Endothelial cell of umbilical vein (primary cell): ENCODE measurements at regions of chr2 and their contacts with region 1.

Region 1: GRCh38 chr2:235106874-235107639 is 155.2 kb downstream of the SH3BP4 start:
- DNase-seq: peak; percentile 70
- H3K4me3 ChIP-seq: no peak overlapping the region
- H3K27ac ChIP-seq: no peak overlapping the region
- H3K4me1 ChIP-seq: no peaks in the 10 kb centered on the region
- H3K27me3 ChIP-seq: no peaks in the 10 kb centered on the region
- CTCF ChIP-seq: peak; percentile 74 to 84
- POLR2A ChIP-seq: no peak

Region 2: DNA sequence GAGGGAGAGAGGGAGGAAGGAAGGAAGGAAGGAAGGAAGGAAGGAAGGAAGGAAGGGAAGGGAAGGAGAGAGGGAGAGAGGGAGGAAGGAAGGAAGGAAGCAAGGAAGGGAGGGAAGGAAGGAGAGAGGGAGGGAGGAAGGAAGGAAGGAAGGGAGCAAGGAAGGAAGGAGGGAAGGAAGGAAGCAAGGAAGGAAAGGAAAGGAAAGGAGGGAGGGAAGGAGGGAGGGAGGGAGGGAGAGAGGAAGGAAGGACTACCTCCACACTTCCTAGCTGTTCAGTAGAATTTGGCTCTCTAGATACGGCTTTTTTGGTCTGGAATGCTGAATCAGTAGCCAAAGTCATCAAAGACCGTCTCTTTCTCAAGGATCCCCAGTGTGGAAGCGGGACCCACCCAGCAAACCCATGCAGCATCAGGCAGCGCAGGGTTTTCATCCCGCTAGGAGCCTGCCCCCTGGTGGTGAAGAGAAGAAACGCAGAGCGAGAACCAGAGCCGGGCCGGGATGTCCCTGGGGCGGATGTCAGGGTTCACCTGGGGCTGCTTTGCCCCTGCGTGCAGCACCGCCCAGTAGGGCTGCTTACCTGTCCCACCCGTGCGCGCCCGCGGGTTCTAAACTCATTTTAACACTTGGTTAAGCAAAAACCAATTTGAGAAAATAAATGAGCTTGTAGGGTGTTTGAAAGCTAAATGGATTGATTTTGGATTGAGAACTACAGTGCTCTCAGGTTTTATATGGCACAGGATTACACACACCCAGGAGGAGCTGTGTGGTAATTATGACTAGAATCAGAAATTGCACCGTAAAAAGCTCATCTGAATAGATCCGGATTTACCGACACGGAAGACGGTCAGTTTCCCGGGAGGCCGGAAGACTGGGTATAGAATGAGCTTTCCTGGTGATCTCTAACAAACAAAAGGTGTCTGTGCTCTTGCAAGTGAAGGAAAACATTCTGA is 562.1 kb before region 1 on chr2:
- CTCF ChIA-PET with region 1: interaction called, 98 read pairs
- POLR2A ChIA-PET with region 1: no interaction called
- dilution Hi-C with region 1: loop called (anchors 25 kb)
- intact Hi-C with region 1: loop called (anchors 1 kb)
- DNase-seq: peak; percentile 38
- H3K4me3 ChIP-seq: no peak overlapping the region
- H3K27ac ChIP-seq: no peak overlapping the region
- H3K4me1 ChIP-seq: peaks cover 6% of the 10 kb centered on the region
- H3K27me3 ChIP-seq: peaks cover 0 to 6% of the 10 kb centered on the region in 2 experiments
- CTCF ChIP-seq: peak; percentile 71 to 96
- POLR2A ChIP-seq: no peak

Region 3: DNA sequence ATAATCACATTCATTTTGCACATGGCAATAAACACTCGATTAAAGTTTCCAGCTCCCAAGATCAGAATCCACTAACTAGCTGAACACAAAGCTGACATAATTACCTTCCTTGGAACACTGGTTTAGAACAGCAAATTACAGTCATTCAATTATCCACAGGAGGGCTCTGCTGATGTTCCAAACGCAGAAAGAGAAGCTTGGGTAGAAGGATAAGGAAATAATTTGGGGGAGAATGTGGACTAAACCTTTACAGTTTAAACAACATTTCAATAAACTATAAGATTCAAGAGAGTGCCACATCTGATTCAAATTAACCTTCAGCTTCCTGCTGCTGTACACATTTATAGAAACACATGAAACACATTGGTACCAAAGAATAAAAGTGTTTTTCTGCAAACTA is 542.4 kb before region 1 on chr2:
- CTCF ChIA-PET with region 1: interaction called, 17 read pairs
- POLR2A ChIA-PET with region 1: no interaction called
- dilution Hi-C with region 1: loop called (anchors 25 kb)
- intact Hi-C with region 1: no loop called
- DNase-seq: peak; percentile 12
- H3K4me3 ChIP-seq: no peak overlapping the region
- H3K27ac ChIP-seq: no peak overlapping the region
- H3K4me1 ChIP-seq: no peaks in the 10 kb centered on the region
- H3K27me3 ChIP-seq: peaks cover 0 to under 1% of the 10 kb centered on the region in 2 experiments
- CTCF ChIP-seq: peak in 1 of 2 donors; percentile 4
- POLR2A ChIP-seq: no peak

Region 4: GRCh38 chr2:234751275-234751973 is 355.6 kb before region 1 on chr2:
- CTCF ChIA-PET with region 1: interaction called, 17 read pairs
- POLR2A ChIA-PET with region 1: no interaction called
- dilution Hi-C with region 1: no loop called
- intact Hi-C with region 1: loop called (anchors 2 kb)
- DNase-seq: peak; percentile 10
- H3K4me3 ChIP-seq: no peak overlapping the region
- H3K27ac ChIP-seq: no peak overlapping the region
- H3K4me1 ChIP-seq: no peaks in the 10 kb centered on the region
- H3K27me3 ChIP-seq: peaks cover 0 to 5% of the 10 kb centered on the region in 2 experiments
- CTCF ChIP-seq: no peak
- POLR2A ChIP-seq: no peak

Region 5: GRCh38 chr2:234951664-234952269 is 155.3 kb before region 1 on chr2 and contains the start of gene SH3BP4:
- CTCF ChIA-PET with region 1: interaction called, 13 read pairs
- POLR2A ChIA-PET with region 1: no interaction called
- dilution Hi-C with region 1: no loop called
- intact Hi-C with region 1: loop called (anchors 1 kb)
- DNase-seq: peak; percentile 64
- H3K4me3 ChIP-seq: peak within 1 kb of the TSS; percentile 87 to 95 (median 94)
- H3K27ac ChIP-seq: peak within 1 kb of the TSS; percentile 92
- H3K4me1 ChIP-seq: peaks cover 28% of the 10 kb centered on the region
- H3K27me3 ChIP-seq: no peaks in the 10 kb centered on the region
- CTCF ChIP-seq: no peak
- POLR2A ChIP-seq: peak; percentile 60
- total RNA-seq, gene SH3BP4: 100.0 and 105 TPM in 2 replicates

Region 6: DNA sequence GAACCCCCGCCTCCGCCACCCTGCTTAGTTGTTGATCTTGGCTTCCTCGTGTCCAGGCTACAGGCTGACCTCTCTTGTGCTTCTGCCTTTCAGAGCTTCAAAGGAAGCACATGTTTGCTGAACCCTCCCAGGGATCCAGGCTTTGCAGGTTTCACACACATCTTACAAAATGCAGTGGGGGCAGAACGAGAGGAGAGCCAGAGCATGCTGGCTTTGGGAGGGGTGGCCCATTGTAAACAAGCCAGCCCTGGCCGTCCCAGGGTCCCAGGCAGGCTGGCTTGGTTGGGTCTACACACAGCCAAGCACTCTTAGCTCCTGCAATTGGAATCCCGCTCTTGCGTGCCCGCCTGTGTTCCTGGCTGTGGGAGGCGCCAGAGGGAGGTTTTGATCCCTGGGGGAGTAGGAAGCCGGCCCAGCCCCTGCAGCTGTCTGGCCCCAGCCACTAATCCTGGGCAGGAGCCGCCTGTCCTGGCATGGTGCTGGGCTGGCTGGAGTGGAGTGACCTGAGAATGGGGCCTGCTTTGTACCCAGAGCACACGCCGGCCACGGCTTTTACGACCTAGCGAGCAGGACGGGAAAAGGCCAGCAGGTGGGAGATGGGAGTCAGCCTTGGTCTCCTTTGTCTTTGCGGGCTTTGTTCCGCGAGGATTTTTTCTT is 101.3 kb before region 1 on chr2:
- CTCF ChIA-PET with region 1: interaction called, 12 read pairs
- POLR2A ChIA-PET with region 1: no interaction called
- dilution Hi-C with region 1: no loop called
- intact Hi-C with region 1: loop called (anchors 1 kb)
- DNase-seq: peak; percentile 75
- H3K4me3 ChIP-seq: no peak overlapping the region
- H3K27ac ChIP-seq: peak overlapping the region; percentile 43
- H3K4me1 ChIP-seq: peaks cover 17% of the 10 kb centered on the region
- H3K27me3 ChIP-seq: no peaks in the 10 kb centered on the region
- CTCF ChIP-seq: peak; percentile 25 to 26
- POLR2A ChIP-seq: no peak

Region 7: GRCh38 chr2:235551965-235552364 is 444.9 kb after region 1 on chr2:
- CTCF ChIA-PET with region 1: no interaction called
- POLR2A ChIA-PET with region 1: no interaction called
- dilution Hi-C with region 1: no loop called
- intact Hi-C with region 1: no loop called
- DNase-seq: peak; percentile 81
- H3K4me3 ChIP-seq: no peak overlapping the region
- H3K27ac ChIP-seq: no peak overlapping the region
- H3K4me1 ChIP-seq: no peaks in the 10 kb centered on the region
- H3K27me3 ChIP-seq: no peaks in the 10 kb centered on the region
- CTCF ChIP-seq: peak; percentile 59 to 86
- POLR2A ChIP-seq: no peak